ENCODE measurements at regions of chr12 and their contacts with region 1.

Region 1: DNA sequence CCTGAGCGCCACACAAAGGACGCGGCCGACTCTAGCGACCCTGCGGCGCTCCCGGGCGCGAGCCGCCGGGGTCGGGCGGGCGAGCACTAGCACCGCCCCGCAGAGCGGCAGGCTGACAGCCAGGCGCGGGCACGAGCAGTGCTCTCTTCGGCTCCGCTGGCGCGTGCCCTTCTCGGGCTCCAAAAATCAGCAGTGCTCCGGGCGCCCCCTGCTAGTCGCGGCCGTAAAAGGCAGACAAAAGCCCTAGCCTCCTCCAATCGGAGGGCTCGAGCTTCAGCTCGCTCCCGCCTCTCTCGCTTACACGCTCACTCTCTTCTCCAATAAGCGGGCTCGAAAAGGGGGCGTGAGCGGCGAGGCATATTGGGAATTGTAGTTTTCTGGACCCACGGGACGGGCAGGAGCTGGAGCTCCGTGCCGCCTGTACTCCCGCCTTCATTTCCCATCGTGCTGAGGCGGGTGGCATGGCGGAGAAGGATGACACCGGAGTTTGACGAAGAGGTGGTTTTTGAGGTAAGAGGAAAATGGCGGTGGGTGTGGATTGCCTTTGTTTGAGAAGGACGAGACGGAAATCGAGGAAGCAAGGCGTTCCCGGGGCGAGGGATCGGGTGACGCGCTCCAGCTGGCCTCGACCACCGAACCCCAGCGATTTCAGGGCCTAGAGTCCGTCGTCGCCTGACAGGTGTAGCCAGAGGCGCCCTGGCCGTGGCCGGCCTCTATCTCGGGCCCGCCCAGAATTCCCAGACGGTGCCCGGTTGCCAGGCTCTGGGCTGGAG is at the starts of genes FGD6 and VEZT:
- DNase-seq: peak; percentile 92
- ATAC-seq: peak; percentile 92
- H3K4me3 Mint-ChIP-seq: peak within 1 kb of the TSS; percentile 96
- H3K27ac Mint-ChIP-seq: peak within 1 kb of the TSS; percentile 95
- H3K4me1 Mint-ChIP-seq: peaks cover 42% of the 10 kb centered on the region
- H3K27me3 Mint-ChIP-seq: no peaks in the 10 kb centered on the region
- CTCF ChIP-seq: no peak
- total RNA-seq, gene FGD6: 3.7 and 5.4 TPM in 2 replicates
- total RNA-seq, gene VEZT: 47.2 and 58.7 TPM in 2 replicates

Region 2: GRCh38 chr12:93467351-93468007 is 1750.1 kb before region 1 on chr12 and contains the start of gene MRPL42:
- CTCF ChIA-PET with region 1: no interaction called
- POLR2A ChIA-PET with region 1: no interaction called
- intact Hi-C with region 1: loop called (anchors 5 kb)
- DNase-seq: peak; percentile 93
- ATAC-seq: peak; percentile 92
- H3K4me3 Mint-ChIP-seq: peak within 1 kb of the TSS; percentile 95
- H3K27ac Mint-ChIP-seq: peak within 1 kb of the TSS; percentile 94
- H3K4me1 Mint-ChIP-seq: peaks cover 23% of the 10 kb centered on the region
- H3K27me3 Mint-ChIP-seq: no peaks in the 10 kb centered on the region
- CTCF ChIP-seq: no peak
- total RNA-seq, gene MRPL42: 40.9 and 44.6 TPM in 2 replicates

Region 3: DNA sequence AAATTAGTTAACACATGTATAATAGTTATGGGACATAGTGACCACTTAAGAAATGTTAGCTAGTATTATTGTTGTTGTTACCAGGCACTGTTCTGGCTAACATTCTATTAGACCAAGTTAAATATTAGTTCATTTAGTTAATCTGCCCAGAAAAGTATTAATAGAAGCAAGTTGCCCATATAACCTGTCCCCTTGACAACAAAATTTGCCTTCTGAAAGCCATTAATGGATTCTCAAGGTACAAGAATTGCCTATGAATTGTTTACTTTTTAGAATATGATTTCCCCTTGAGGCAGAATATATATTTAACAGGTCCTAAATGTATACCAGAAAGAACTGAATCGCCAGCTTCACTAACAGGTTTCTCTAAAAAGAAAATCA is 399.9 kb before region 1 on chr12:
- CTCF ChIA-PET with region 1: no interaction called
- POLR2A ChIA-PET with region 1: no interaction called
- intact Hi-C with region 1: loop called (anchors 10 kb)
- DNase-seq: no peak
- ATAC-seq: no peak
- H3K4me3 Mint-ChIP-seq: peak overlapping the region; percentile 87
- H3K27ac Mint-ChIP-seq: peak overlapping the region; percentile 97
- H3K4me1 Mint-ChIP-seq: peaks cover 71% of the 10 kb centered on the region
- H3K27me3 Mint-ChIP-seq: no peaks in the 10 kb centered on the region
- CTCF ChIP-seq: no peak

Region 4: GRCh38 chr12:95102916-95103671 is 114.5 kb before region 1 on chr12:
- CTCF ChIA-PET with region 1: no interaction called
- POLR2A ChIA-PET with region 1: no interaction called
- intact Hi-C with region 1: loop called (anchors 1 kb)
- DNase-seq: no peak
- ATAC-seq: peak; percentile 94
- H3K4me3 Mint-ChIP-seq: no peak overlapping the region
- H3K27ac Mint-ChIP-seq: peak overlapping the region; percentile 37
- H3K4me1 Mint-ChIP-seq: peaks cover 17% of the 10 kb centered on the region
- H3K27me3 Mint-ChIP-seq: no peaks in the 10 kb centered on the region
- CTCF ChIP-seq: no peak

Region 5: DNA sequence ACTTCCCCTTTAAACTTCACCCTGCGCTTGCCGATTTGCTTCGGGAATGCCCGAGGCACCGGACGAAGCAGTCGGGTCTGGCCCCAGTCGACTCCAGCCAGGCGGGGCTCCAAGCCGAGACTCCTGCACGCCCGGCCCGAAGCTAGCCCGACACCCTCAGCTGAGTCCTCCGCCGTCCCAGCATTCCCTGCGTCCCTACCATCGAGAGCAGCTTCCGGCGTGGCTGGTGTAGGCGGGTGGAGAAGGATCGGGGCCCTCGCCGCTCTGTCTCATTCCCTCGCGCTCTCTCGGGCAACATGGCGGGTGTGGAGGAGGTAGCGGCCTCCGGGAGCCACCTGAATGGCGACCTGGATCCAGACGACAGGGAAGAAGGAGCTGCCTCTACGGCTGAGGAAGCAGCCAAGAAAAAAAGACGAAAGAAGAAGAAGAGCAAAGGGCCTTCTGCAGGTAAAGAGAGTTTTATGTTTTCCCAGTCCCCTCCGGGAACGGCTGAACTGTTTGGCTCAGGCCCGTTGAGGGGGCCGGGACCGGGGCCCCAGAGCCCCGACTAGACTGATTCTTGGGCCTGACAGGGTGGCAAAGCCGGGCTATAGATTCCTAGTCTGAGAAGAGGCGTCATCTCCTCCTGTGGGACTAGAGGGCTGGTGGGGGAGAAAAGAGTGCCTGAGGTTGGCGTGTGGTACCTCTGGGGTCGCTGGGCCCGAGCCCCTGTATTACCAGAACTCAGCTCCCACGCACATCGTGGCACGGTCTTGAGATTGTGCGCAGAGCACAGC is 256.5 kb after region 1 on chr12 and contains the start of gene METAP2:
- CTCF ChIA-PET with region 1: interaction called, 3 read pairs
- POLR2A ChIA-PET with region 1: interaction called, 26 read pairs
- intact Hi-C with region 1: loop called (anchors 1 kb)
- DNase-seq: peak; percentile 87
- ATAC-seq: peak; percentile 97
- H3K4me3 Mint-ChIP-seq: peak within 1 kb of the TSS; percentile 100
- H3K27ac Mint-ChIP-seq: peak within 1 kb of the TSS; percentile 99
- H3K4me1 Mint-ChIP-seq: peaks cover 51% of the 10 kb centered on the region
- H3K27me3 Mint-ChIP-seq: peaks cover 2% of the 10 kb centered on the region
- CTCF ChIP-seq: no peak
- total RNA-seq, gene METAP2: 63.0 and 67.4 TPM in 2 replicates

Region 6: DNA sequence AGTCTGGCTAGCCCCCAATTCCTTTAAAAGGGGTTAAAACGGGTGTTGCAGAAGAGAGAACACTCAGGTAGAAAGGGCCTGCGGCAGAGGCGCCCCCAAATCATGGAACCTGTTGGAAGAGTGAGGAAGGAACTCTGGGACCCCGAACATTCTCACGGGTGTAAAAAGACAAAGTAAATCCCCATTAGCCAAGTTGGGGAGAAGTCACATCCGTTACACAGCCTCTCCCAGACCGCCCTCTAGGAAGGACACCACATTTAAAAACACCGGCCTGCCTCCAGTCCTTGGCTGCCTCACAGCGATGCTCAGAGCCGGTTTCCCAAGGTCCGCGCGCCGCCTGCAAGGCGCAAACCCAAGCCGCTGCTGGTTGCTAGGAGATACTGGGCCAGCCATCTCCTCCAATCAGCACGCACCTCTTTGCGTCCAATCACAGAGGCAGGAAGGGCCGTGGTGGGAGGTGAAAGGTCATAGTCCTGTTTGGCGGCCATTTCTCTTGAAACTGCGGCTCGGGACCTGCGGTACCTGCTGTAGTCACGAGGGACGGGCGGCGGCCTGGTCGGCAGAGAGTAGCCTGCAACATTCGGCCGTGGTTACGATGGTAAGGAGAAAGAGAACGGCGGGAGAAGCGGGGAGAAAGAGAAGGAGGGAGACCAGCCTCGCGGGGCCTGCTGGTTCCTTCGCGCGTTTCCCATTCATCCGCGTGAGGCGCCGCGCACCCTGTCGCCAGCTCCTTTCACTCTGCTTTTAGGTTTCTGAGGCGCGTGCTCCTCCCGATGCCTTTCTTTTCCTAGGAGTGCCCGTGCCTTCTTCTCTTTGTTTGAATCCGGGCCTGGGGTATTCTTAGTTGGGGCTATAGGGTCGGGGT is 641.1 kb after region 1 on chr12 and contains the start of gene SNRPF:
- CTCF ChIA-PET with region 1: no interaction called
- POLR2A ChIA-PET with region 1: no interaction called
- intact Hi-C with region 1: loop called (anchors 5 kb)
- DNase-seq: peak; percentile 85
- ATAC-seq: peak; percentile 97
- H3K4me3 Mint-ChIP-seq: no peak within 1 kb of the TSS
- H3K27ac Mint-ChIP-seq: peak within 1 kb of the TSS; percentile 4
- H3K4me1 Mint-ChIP-seq: peaks cover 12% of the 10 kb centered on the region
- H3K27me3 Mint-ChIP-seq: peaks cover 8% of the 10 kb centered on the region
- CTCF ChIP-seq: no peak
- total RNA-seq, gene SNRPF: 35.2 and 38.2 TPM in 2 replicates

Region 7: DNA sequence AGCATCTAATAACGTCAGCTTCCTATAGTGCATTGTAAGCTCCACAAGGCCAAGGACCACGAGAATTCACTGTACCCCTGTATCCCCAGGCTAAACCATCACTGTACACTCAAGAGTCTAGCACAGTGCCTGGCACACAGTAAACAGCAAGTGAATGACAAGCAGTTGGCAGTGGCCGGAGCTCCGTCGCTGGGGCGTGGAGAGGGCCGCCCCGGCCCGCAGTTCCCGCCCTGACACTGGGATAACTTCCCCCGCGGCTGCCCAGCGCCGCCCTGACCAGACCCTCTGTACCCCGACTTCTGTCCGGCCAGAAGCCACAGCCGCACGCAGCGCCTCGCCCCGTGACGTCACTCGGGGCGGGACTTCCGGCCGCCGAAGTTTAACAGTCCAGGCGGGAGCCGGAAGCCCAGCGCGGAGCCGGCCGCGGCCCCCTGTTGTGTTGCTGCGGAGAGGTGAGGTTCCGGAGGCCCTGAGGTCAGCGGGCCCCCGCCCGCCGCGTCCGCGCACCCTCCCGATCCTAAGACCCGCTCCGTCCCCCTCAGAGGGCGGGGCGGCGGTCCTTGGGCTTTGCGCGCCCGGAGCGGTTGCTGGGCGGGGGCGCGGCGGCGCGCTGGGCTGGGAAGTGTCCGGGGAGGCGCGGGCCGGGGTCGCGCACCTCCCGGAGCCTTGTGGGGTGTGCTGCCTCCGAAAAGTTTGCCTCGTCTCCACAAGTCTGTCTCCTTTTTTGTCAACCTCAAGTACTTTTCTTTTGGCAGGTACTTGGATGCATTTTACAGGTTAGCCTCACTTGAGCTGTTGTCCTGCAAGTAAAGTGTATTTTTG is 1689.5 kb after region 1 on chr12 and contains the start of gene NEDD1:
- CTCF ChIA-PET with region 1: no interaction called
- POLR2A ChIA-PET with region 1: no interaction called
- intact Hi-C with region 1: loop called (anchors 10 kb)
- DNase-seq: peak; percentile 85
- ATAC-seq: peak; percentile 85
- H3K4me3 Mint-ChIP-seq: peak within 1 kb of the TSS; percentile 95
- H3K27ac Mint-ChIP-seq: peak within 1 kb of the TSS; percentile 91
- H3K4me1 Mint-ChIP-seq: peaks cover 41% of the 10 kb centered on the region
- H3K27me3 Mint-ChIP-seq: peaks cover 2% of the 10 kb centered on the region
- CTCF ChIP-seq: no peak
- total RNA-seq, gene NEDD1: 15.0 and 16.3 TPM in 2 replicates

Measured in activated B cell treated with CpG ODN at 0.5 μM for 24 hours (primary cell).